ENCODE measurements at regions of chr12 and their contacts with region 1.

Region 1: DNA sequence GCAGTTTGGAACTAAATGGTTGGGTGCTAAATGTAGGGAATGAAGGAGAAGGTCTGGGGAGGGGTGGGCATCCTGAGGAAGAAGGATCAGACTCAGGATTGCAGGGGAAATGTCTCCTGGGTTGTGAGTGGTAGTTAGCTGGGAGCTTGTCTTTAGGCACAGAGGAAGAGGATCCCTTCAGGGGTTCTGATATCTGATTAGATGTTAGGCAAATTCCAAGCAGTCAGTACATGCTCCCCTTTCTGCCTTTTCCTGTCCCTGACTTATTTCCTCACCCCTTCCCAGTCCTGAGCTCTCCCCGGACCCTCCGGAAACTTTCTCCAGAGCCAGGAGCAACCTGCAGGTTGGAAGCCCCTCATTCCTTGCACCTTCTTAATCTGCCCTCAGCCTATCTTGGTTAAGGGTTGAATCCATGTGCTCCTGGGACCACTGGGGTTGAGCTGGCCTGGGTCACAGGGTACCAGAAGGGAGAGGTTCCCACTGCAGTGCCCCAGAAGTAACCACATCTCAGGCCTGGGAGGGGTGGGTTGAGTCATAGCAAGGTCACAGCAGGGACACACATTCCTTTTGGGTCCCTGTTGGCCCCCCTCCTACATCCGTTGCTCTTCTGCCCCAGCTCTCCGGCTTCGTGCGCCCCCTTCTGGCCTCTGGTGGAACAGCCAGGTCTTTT is 1.6 kb downstream of the IGFBP6 start:
- DNase-seq: peak; percentile 74
- H3K4me3 ChIP-seq: peak overlapping the region; percentile 81
- H3K27me3 ChIP-seq: no peaks in the 10 kb centered on the region
- CTCF ChIP-seq: peak; percentile 94

Region 2: GRCh38 chr12:53039851-53040250 is 59.3 kb before region 1 on chr12:
- CTCF ChIA-PET with region 1: interaction called, 18 read pairs
- POLR2A ChIA-PET with region 1: no interaction called
- DNase-seq: no peak
- H3K4me3 ChIP-seq: no peak overlapping the region
- H3K27me3 ChIP-seq: no peaks in the 10 kb centered on the region
- CTCF ChIP-seq: no peak

Region 3: GRCh38 chr12:53054112-53054833 is 44.8 kb before region 1 on chr12:
- CTCF ChIA-PET with region 1: interaction called, 28 read pairs
- POLR2A ChIA-PET with region 1: no interaction called
- DNase-seq: no peak
- H3K4me3 ChIP-seq: peak overlapping the region; percentile 24
- H3K27me3 ChIP-seq: no peaks in the 10 kb centered on the region
- CTCF ChIP-seq: no peak

Region 4: DNA sequence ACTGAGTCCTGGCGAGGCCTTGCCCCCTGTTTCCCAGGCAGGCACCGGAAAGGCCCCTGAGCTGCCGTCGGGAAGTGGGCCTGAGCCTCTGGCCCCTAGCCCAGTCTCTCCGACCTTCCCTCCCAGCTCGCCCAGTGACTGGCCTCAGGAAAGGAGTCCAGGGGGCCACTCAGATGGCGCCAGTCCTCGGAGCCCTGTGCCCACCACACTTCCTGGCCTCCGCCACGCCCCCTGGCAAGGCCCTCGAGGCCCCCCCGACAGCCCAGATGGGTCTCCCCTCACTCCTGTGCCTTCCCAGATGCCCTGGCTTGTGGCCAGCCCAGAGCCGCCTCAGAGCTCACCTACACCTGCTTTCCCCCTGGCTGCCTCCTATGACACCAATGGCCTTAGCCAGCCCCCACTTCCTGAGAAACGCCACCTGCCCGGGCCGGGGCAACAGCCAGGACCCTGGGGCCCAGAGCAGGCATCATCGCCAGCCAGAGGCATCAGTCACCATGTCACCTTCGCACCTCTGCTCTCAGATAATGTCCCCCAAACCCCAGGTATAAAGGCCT is 38.3 kb before region 1 on chr12:
- CTCF ChIA-PET with region 1: interaction called, 416 read pairs
- POLR2A ChIA-PET with region 1: interaction called, 17 read pairs
- DNase-seq: no peak
- H3K4me3 ChIP-seq: no peak overlapping the region
- H3K27me3 ChIP-seq: no peaks in the 10 kb centered on the region
- CTCF ChIP-seq: no peak

Region 5: GRCh38 chr12:53079226-53080117 is 19.6 kb before region 1 on chr12 and contains the start of gene SPRYD3:
- CTCF ChIA-PET with region 1: interaction called, 416 read pairs
- POLR2A ChIA-PET with region 1: interaction called, 5 read pairs
- DNase-seq: peak; percentile 84
- H3K4me3 ChIP-seq: peak within 1 kb of the TSS; percentile 74
- H3K27me3 ChIP-seq: no peaks in the 10 kb centered on the region
- CTCF ChIP-seq: no peak
- polyA plus RNA-seq, gene SPRYD3: 34.8 and 48.0 TPM in 2 replicates

Region 6: GRCh38 chr12:53086361-53086760 is 12.8 kb before region 1 on chr12:
- CTCF ChIA-PET with region 1: interaction called, 59 read pairs
- POLR2A ChIA-PET with region 1: interaction called, 5 read pairs
- DNase-seq: no peak
- H3K4me3 ChIP-seq: no peak overlapping the region
- H3K27me3 ChIP-seq: no peaks in the 10 kb centered on the region
- CTCF ChIP-seq: no peak